ENCODE measurements at regions of chr3 and their contacts with region 1.

Region 1: DNA sequence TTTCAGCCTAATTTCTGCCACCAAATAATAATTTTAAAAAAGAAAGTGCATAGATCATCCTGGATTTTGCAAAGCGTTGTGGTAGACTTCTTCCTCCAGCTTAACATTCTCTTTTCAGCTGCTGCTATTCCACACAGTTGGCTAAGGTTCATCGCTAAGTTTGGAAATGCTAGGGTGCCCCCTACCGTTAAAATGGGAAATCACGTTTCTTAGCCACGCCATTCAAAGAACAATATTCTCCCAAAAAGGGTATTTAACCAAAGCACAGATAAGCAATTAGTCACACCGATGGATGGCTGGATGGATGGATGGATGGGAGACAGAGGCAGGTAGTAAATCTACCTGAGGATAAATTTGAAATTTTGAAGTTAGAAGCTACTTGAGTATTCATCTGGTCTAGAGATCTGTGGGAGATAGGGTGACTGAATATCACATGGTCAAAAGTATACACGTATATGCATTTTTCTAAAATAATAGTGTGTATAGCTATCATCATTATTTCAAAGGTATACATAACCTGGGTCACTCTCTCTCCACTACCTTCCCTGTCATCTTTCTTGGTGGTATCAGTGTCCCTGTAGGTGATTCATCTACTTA is 67.2 kb downstream of the EFHB start:
- DNase-seq: peak; percentile 48
- ATAC-seq: peak; percentile 83
- H3K4me3 Mint-ChIP-seq: no peak overlapping the region
- H3K27ac Mint-ChIP-seq: no peak overlapping the region
- H3K4me1 Mint-ChIP-seq: no peaks in the 10 kb centered on the region
- H3K27me3 Mint-ChIP-seq: no peaks in the 10 kb centered on the region; the same call in 1 of the 2 replicates
- CTCF ChIP-seq: peak; percentile 84

Region 2: GRCh38 chr3:19348929-19349564 is 517.8 kb before region 1 on chr3:
- CTCF ChIA-PET with region 1: interaction called, 24 read pairs
- POLR2A ChIA-PET with region 1: no interaction called
- DNase-seq: no peak
- ATAC-seq: peak; percentile 82
- H3K4me3 Mint-ChIP-seq: no peak overlapping the region
- H3K27ac Mint-ChIP-seq: no peak overlapping the region
- H3K4me1 Mint-ChIP-seq: peaks cover 21% of the 10 kb centered on the region
- H3K27me3 Mint-ChIP-seq: no peaks in the 10 kb centered on the region
- CTCF ChIP-seq: peak; percentile 56